Activated CD4-positive, alpha-beta T cell treated with anti-CD3 and anti-CD28 coated beads for 36 hours (primary cell): ENCODE measurements at regions of chr11 and their contacts with region 1.

Region 1: DNA sequence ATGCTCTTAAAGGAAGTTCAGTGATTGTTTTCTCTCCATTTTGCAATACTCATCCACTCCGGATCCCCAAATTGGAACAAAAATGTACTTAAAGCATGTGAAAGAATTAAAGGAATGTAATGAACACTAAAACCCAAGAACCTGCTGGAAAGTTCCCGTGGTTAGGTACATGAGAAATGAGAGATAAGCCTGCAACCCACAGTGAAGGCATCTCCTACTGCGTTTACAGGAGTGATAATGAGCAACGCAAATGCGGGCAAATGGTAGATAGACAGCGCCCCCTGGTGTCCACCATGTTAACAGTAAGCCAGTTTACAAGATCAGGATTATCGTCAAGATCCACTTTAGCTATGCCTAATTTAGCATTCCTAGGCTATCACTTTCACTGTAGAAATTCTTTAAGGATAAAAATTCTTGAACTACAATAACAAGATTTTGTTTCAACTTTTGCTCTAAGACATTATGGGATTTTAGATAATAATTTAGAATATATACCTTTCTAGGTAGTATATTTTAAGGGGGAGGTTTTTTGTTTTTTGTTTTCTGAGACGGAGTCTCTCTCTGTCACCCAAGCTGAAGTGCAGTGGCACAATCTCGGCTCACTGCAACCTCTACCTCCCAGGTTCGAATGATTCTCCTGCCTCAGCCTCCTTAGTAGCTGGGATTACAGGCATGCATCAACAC is 29.9 kb downstream of the ALG9 start:
- DNase-seq: peak; percentile 94
- ATAC-seq: peak; percentile 95
- H3K4me3 Mint-ChIP-seq: no peak overlapping the region
- H3K27ac Mint-ChIP-seq: no peak overlapping the region
- H3K4me1 Mint-ChIP-seq: peaks cover 9% of the 10 kb centered on the region
- H3K27me3 Mint-ChIP-seq: no peaks in the 10 kb centered on the region

Region 2: GRCh38 chr11:111454561-111455192 is 386.8 kb before region 1 on chr11:
- CTCF ChIA-PET with region 1: interaction called, 5 read pairs
- POLR2A ChIA-PET with region 1: no interaction called
- intact Hi-C with region 1: loop called in 1 of 2 experiments (anchors 1 kb)
- DNase-seq: peak; percentile 88
- ATAC-seq: peak; percentile 93
- H3K4me3 Mint-ChIP-seq: no peak overlapping the region
- H3K27ac Mint-ChIP-seq: no peak overlapping the region
- H3K4me1 Mint-ChIP-seq: no peaks in the 10 kb centered on the region
- H3K27me3 Mint-ChIP-seq: peaks cover 4% of the 10 kb centered on the region

Region 3: GRCh38 chr11:111565114-111565720 is 276.3 kb before region 1 on chr11:
- CTCF ChIA-PET with region 1: interaction called, 9 read pairs
- POLR2A ChIA-PET with region 1: no interaction called
- intact Hi-C with region 1: loop called (anchors 1 kb)
- DNase-seq: peak; percentile 76
- ATAC-seq: peak; percentile 44
- H3K4me3 Mint-ChIP-seq: no peak overlapping the region
- H3K27ac Mint-ChIP-seq: no peak overlapping the region
- H3K4me1 Mint-ChIP-seq: no peaks in the 10 kb centered on the region
- H3K27me3 Mint-ChIP-seq: no peaks in the 10 kb centered on the region

Region 4: DNA sequence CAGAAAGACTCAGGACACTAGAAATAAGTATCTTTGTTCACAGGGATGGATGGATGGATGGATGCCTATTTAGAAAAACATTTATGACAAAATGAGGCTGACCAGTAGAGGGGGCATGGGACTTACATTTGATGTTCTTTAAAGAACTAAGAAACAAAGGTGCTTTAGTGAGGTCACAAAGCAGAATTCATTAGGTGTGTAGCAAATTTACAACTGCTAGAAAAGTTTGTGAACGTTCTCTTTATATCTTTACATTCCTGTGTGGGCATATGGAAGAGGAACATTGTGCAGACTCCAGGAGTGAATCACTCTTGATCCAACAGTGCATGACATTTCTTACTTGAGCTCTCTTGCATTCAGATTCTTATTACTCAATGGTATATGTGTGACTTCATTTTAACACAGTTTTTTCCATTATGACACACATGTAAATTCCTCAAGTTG is 255.1 kb before region 1 on chr11:
- CTCF ChIA-PET with region 1: interaction called, 21 read pairs
- POLR2A ChIA-PET with region 1: no interaction called
- intact Hi-C with region 1: loop called (anchors 1 to 5 kb)
- DNase-seq: peak; percentile 57
- ATAC-seq: peak; percentile 33
- H3K4me3 Mint-ChIP-seq: no peak overlapping the region
- H3K27ac Mint-ChIP-seq: no peak overlapping the region
- H3K4me1 Mint-ChIP-seq: no peaks in the 10 kb centered on the region
- H3K27me3 Mint-ChIP-seq: no peaks in the 10 kb centered on the region

Region 5: DNA sequence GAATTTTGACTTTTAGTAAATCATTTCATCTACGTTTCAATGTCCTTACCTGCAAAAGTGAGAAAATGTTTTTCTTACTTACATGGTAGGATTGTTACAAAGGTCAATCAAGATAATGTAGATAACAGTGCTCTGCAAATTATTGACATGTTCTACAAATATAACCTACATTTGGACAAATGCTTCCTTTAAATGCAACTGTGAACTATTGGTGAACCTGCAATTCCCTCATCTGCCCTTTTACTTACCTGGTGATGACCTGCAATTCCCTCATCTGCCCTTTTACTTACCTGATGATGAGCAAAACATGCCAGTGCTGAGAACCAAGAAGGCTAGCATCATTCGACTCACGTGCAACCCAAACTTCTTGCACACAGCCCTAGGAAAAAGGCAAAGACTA is 18.7 kb after region 1 on chr11:
- CTCF ChIA-PET with region 1: interaction called, 10 read pairs
- POLR2A ChIA-PET with region 1: no interaction called
- intact Hi-C with region 1: no loop called
- DNase-seq: no peak
- ATAC-seq: no peak
- H3K4me3 Mint-ChIP-seq: no peak overlapping the region
- H3K27ac Mint-ChIP-seq: no peak overlapping the region
- H3K4me1 Mint-ChIP-seq: no peaks in the 10 kb centered on the region
- H3K27me3 Mint-ChIP-seq: no peaks in the 10 kb centered on the region